ENCODE measurements at regions of chr17 and their contacts with region 1.

Region 1: DNA sequence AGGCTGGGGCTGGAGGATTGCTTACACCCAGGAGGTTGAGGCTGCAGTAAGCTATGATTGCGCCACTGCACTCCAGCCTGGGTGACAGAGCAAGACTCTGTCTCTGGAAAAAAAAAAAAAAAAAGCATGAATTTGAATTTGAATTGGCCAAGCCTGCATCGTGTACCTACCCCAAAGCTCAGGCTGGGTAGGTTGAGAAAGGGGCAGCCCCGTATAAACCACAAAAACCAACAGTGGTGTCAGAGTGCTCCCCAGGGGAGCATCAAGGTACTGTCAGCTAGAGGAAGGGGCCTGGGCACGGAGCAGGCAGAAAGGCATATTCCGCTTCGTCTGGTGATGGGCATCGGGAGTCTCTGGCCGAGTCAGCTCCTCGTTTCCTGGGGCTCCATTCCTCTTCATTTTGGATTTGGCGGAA is 40.9 kb downstream of the RAP1GAP2 start:
- DNase-seq: no peak
- H3K4me3 Mint-ChIP-seq: no peak overlapping the region
- H3K27ac Mint-ChIP-seq: no peak overlapping the region
- H3K4me1 Mint-ChIP-seq: peaks cover 5% of the 10 kb centered on the region
- H3K27me3 Mint-ChIP-seq: peaks cover 2% of the 10 kb centered on the region

Region 2: GRCh38 chr17:2786176-2786881 is 50.8 kb before region 1 on chr17:
- intact Hi-C with region 1: loop called (anchors 10 kb)
- DNase-seq: peak; percentile 90
- H3K4me3 Mint-ChIP-seq: no peak overlapping the region
- H3K27ac Mint-ChIP-seq: no peak overlapping the region
- H3K4me1 Mint-ChIP-seq: peaks cover 13% of the 10 kb centered on the region
- H3K27me3 Mint-ChIP-seq: peaks cover 19% of the 10 kb centered on the region

Region 3: GRCh38 chr17:3127451-3127850 is 290.3 kb after region 1 on chr17 and contains the start of gene OR1G1:
- intact Hi-C with region 1: no loop called
- DNase-seq: no peak
- H3K4me3 Mint-ChIP-seq: no peak within 1 kb of the TSS
- H3K27ac Mint-ChIP-seq: no peak within 1 kb of the TSS
- H3K4me1 Mint-ChIP-seq: no peaks in the 10 kb centered on the region
- H3K27me3 Mint-ChIP-seq: peaks cover 3% of the 10 kb centered on the region
- total RNA-seq, gene OR1G1: not detected in 2 replicates

Measured in activated T-helper 2 cell treated with anti-CD3 and anti-CD28 coated beads, Interferon-gamma antibody, Interleukin-2, Interleukin-4, amounts not matched to agents 10 μg/mL and 5 μg/mL and 100 μg/mL, durations not matched to agents 14 hours and 24 hours and 36 hours (primary cell).